MCF 10A (cell line): ENCODE measurements at regions of chr3 and their contacts with region 1.

Region 1: GRCh38 chr3:20340324-20340928 is 154.4 kb upstream of the SGO1 start:
- DNase-seq: peak; percentile 81
- H3K4me3 Mint-ChIP-seq: no peak overlapping the region
- H3K27ac Mint-ChIP-seq: no peak overlapping the region
- H3K4me1 Mint-ChIP-seq: no peaks in the 10 kb centered on the region
- H3K27me3 Mint-ChIP-seq: no peaks in the 10 kb centered on the region
- CTCF ChIP-seq: peak; percentile 91

Region 2: DNA sequence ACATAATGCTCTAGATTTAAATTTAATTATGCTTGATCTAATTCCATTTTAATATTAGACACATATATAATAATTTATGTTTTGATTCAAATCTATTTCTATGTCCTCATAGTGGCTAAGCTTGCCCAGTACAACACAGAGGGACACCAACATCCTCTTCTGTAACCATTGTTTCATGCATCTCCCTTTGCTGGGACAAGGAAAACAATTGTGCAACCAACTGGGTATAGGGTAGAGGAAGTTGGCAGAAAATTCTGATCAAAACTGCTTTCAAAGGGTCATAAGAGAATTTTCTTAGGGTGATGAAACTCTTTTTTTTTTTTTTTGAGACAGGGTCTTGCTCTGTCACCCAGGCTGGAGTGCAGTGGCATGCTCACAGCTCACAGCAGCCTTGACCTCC is 33.0 kb before region 1 on chr3:
- CTCF ChIA-PET with region 1: no interaction called
- POLR2A ChIA-PET with region 1: no interaction called
- intact Hi-C with region 1: no loop called
- DNase-seq: no peak
- H3K4me3 Mint-ChIP-seq: no peak overlapping the region
- H3K27ac Mint-ChIP-seq: no peak overlapping the region
- H3K4me1 Mint-ChIP-seq: no peaks in the 10 kb centered on the region
- H3K27me3 Mint-ChIP-seq: no peaks in the 10 kb centered on the region
- CTCF ChIP-seq: no peak

Region 3: DNA sequence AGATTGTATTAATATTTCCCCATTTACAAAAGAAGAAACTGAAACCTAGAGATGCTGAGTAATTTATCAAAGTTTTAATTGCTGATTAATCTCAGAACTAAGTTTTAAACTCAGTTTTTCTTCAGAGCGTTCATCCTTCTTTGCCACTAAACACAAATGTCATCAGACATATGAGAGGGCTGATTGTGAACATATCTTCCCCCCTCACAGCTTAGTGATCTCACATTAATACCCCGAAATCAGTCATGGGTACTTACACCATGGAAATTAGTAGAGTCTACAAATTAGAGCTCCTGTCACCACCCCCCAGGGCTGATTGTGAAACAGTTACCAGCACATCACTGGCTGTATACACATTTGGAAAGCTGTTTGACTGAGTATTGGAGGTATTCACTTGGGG is 34.9 kb after region 1 on chr3:
- CTCF ChIA-PET with region 1: no interaction called
- POLR2A ChIA-PET with region 1: no interaction called
- intact Hi-C with region 1: no loop called
- DNase-seq: no peak
- H3K4me3 Mint-ChIP-seq: no peak overlapping the region
- H3K27ac Mint-ChIP-seq: no peak overlapping the region
- H3K4me1 Mint-ChIP-seq: no peaks in the 10 kb centered on the region
- H3K27me3 Mint-ChIP-seq: no peaks in the 10 kb centered on the region
- CTCF ChIP-seq: no peak

Region 4: DNA sequence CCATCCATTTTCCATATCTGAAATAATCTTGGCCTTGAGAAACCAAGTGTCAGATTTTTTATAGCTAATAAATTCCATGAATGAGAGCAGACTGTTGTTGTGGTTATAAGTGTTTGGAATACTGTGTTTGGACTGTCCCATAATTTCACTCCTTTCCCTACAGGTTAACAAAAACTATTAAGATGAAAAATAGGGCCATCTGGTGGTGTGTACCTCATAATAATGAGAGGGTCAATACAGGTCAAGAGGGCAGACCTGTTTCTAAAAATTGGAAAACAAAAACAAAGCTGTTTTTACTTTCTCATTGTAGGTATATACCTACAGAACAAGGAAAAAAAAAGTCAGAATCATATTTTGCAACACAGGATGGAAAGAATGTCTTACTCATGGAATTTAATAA is 399.4 kb after region 1 on chr3:
- CTCF ChIA-PET with region 1: no interaction called
- POLR2A ChIA-PET with region 1: no interaction called
- intact Hi-C with region 1: loop called (anchors 2 kb)
- DNase-seq: no peak
- H3K4me3 Mint-ChIP-seq: no peak overlapping the region
- H3K27ac Mint-ChIP-seq: no peak overlapping the region
- H3K4me1 Mint-ChIP-seq: no peaks in the 10 kb centered on the region
- H3K27me3 Mint-ChIP-seq: no peaks in the 10 kb centered on the region
- CTCF ChIP-seq: no peak

Region 5: DNA sequence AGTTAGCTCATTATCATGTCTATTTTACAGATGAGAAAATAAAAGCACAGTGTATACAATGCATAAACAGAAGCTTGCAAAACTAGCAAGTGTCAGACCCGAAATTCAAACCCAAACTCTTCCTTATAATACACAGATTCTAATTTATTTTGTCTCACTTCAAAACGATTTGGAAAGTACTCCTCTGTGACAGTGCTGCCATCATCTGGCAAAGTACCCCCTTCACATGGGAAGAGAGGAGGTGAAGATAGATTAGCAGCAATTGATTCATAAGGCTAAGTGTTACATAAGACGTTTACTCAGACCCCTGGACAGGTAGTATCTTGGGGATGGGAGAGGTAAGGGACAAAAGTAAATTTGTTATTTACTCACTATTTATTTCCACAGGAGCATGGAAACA is 589.6 kb after region 1 on chr3:
- CTCF ChIA-PET with region 1: interaction called, 5 read pairs
- POLR2A ChIA-PET with region 1: no interaction called
- intact Hi-C with region 1: loop called (anchors 1 kb)
- DNase-seq: peak; percentile 52
- H3K4me3 Mint-ChIP-seq: no peak overlapping the region
- H3K27ac Mint-ChIP-seq: no peak overlapping the region
- H3K4me1 Mint-ChIP-seq: no peaks in the 10 kb centered on the region
- H3K27me3 Mint-ChIP-seq: no peaks in the 10 kb centered on the region
- CTCF ChIP-seq: peak; percentile 40

Region 6: DNA sequence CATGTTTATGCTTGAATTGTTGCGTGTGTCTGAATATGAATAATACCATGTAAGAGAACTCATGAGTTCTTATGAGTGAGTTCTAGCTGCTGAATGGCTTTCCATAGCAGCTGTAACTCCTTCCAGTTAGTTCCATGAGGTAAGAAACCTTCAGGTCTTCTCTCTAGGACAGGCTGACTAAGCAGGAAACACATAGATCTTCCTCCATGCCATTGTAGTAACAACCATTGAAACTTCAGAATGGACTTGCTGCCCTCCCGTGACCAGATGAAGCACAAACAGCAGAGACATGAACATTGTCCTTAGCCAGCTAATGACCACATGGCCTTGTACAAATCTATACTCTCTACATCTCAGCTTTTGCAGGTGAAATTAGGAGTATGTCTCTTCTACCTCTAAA is 1210.6 kb after region 1 on chr3:
- CTCF ChIA-PET with region 1: no interaction called
- POLR2A ChIA-PET with region 1: no interaction called
- intact Hi-C with region 1: loop called (anchors 5 kb)
- DNase-seq: peak; percentile 57
- H3K4me3 Mint-ChIP-seq: no peak overlapping the region
- H3K27ac Mint-ChIP-seq: no peak overlapping the region
- H3K4me1 Mint-ChIP-seq: no peaks in the 10 kb centered on the region
- H3K27me3 Mint-ChIP-seq: no peaks in the 10 kb centered on the region
- CTCF ChIP-seq: peak; percentile 25

Region 7: DNA sequence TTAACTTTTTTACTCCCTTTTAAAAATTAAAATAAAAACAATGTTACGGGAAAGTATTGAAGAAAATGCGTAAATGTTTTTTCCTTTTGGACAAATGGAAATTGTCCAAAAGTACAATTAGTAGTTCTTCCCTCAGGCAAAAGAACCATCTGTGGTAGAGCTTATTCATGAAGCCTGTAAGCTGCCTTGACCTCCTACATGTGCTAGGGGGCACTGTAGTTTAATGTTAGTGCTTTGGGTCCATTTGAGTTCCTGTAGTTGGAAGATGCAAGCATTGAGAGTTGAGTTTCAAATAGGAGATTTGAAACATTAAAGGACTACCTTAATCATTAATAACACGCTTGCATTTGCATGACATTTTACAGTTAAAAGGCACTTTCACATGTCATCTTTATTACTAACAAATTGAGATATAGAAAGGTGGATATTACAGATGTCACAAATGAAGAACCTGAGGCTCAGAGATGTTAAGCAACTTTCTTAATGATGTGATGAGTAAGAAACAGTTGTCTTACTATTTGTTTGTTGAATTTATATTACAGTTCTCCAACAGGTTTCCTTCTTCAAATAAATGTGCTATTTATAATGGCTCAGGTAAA is 1412.4 kb after region 1 on chr3:
- CTCF ChIA-PET with region 1: no interaction called
- POLR2A ChIA-PET with region 1: no interaction called
- intact Hi-C with region 1: loop called (anchors 10 kb)
- DNase-seq: peak; percentile 74
- H3K4me3 Mint-ChIP-seq: no peak overlapping the region
- H3K27ac Mint-ChIP-seq: no peak overlapping the region
- H3K4me1 Mint-ChIP-seq: peaks cover 15% of the 10 kb centered on the region
- H3K27me3 Mint-ChIP-seq: no peaks in the 10 kb centered on the region
- CTCF ChIP-seq: peak; percentile 61

Region 8: GRCh38 chr3:22117751-22118346 is 1777.4 kb after region 1 on chr3:
- CTCF ChIA-PET with region 1: no interaction called
- POLR2A ChIA-PET with region 1: no interaction called
- intact Hi-C with region 1: loop called (anchors 5 kb)
- DNase-seq: peak; percentile 56
- H3K4me3 Mint-ChIP-seq: no peak overlapping the region
- H3K27ac Mint-ChIP-seq: no peak overlapping the region
- H3K4me1 Mint-ChIP-seq: peaks cover 17% of the 10 kb centered on the region
- H3K27me3 Mint-ChIP-seq: no peaks in the 10 kb centered on the region
- CTCF ChIP-seq: peak; percentile 51